Caco-2 (cell line): ENCODE measurements at regions of chr12 and their contacts with region 1.

Region 1: DNA sequence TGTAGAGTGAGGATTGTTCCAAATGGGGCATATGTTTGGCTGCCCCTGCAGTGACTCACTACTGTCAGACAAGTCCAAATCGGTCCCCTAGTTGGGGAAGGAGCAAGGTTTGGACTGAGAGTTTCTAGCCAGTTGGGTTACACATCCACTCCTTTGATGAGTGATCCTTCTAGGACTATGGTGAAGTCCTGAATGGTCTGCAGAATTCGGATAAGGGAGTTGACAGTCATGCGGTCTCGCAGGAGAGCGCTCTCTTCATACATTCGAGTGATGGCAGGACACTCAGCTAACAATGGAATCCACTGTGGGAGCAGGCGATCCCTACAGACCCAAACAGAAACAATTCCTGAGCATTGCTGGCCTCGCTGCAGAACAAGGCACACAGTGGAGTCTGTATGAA is 61.5 kb upstream of the SINHCAF start:
- DNase-seq: peak in 1 of 2 experiments; percentile 23
- H3K4me3 ChIP-seq: no peak overlapping the region
- H3K4me3 Mint-ChIP-seq: no peak overlapping the region
- H3K27ac Mint-ChIP-seq: peak overlapping the region; percentile 82
- H3K4me1 ChIP-seq: peaks cover 59% of the 10 kb centered on the region
- H3K4me1 Mint-ChIP-seq: peaks cover 50% of the 10 kb centered on the region
- H3K27me3 ChIP-seq: no peaks in the 10 kb centered on the region
- H3K27me3 Mint-ChIP-seq: no peaks in the 10 kb centered on the region
- CTCF ChIP-seq: no peak

Region 2: GRCh38 chr12:31339831-31340622 is 47.4 kb before region 1 on chr12:
- CTCF ChIA-PET with region 1: interaction called, 4 read pairs
- POLR2A ChIA-PET with region 1: no interaction called
- intact Hi-C with region 1: loop called (anchors 1 kb)
- DNase-seq: peak; percentile 73 to 87
- H3K4me3 ChIP-seq: no peak overlapping the region
- H3K4me3 Mint-ChIP-seq: no peak overlapping the region
- H3K27ac Mint-ChIP-seq: peak overlapping the region; percentile 68
- H3K4me1 ChIP-seq: peaks cover 36% of the 10 kb centered on the region
- H3K4me1 Mint-ChIP-seq: peaks cover 31% of the 10 kb centered on the region
- H3K27me3 ChIP-seq: no peaks in the 10 kb centered on the region
- H3K27me3 Mint-ChIP-seq: no peaks in the 10 kb centered on the region
- CTCF ChIP-seq: no peak

Region 3: GRCh38 chr12:31444736-31445135 is 57.3 kb after region 1 on chr12:
- CTCF ChIA-PET with region 1: no interaction called
- POLR2A ChIA-PET with region 1: no interaction called
- intact Hi-C with region 1: no loop called
- DNase-seq: no peak
- H3K4me3 ChIP-seq: no peak overlapping the region
- H3K4me3 Mint-ChIP-seq: no peak overlapping the region
- H3K27ac Mint-ChIP-seq: no peak overlapping the region
- H3K4me1 ChIP-seq: no peaks in the 10 kb centered on the region
- H3K4me1 Mint-ChIP-seq: no peaks in the 10 kb centered on the region
- H3K27me3 ChIP-seq: no peaks in the 10 kb centered on the region
- H3K27me3 Mint-ChIP-seq: no peaks in the 10 kb centered on the region
- CTCF ChIP-seq: no peak